ENCODE measurements at regions of chr20 and their contacts with region 1.

Region 1: GRCh38 chr20:19193349-19193748 is 19.1 kb upstream of the SLC24A3 start:
- H3K4me3 ChIP-seq: no peak overlapping the region
- H3K27ac ChIP-seq: no peak overlapping the region
- H3K4me1 ChIP-seq: no peaks in the 10 kb centered on the region
- CTCF ChIP-seq: no peak

Region 2: GRCh38 chr20:19205977-19206396 is 12.6 kb after region 1 on chr20:
- CTCF ChIA-PET with region 1: interaction called, 20 read pairs
- POLR2A ChIA-PET with region 1: no interaction called
- H3K4me3 ChIP-seq: no peak overlapping the region
- H3K27ac ChIP-seq: no peak overlapping the region
- H3K4me1 ChIP-seq: no peaks in the 10 kb centered on the region
- CTCF ChIP-seq: peak; percentile 56

Region 3: DNA sequence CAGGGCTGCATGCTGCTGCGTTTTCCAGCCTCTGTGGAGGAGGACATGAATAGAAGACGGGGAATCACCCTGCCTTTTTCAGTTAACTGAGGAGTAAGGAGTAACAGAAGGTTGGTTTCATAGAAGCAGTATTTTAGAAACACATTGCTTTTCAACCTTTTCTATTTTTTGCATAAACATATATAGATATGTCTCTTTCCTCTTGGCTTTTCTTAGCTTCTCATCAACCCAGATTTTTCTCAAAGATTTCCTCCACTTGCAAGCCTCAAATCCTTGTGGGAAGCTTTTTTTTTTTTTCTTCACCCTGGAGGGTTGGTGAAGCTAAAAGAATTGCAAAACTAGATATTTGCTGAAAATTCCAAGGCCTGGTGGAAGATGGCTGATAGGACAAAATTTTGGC is 25.1 kb after region 1 on chr20:
- CTCF ChIA-PET with region 1: no interaction called
- POLR2A ChIA-PET with region 1: no interaction called
- H3K4me3 ChIP-seq: no peak overlapping the region
- H3K27ac ChIP-seq: no peak overlapping the region
- H3K4me1 ChIP-seq: no peaks in the 10 kb centered on the region
- CTCF ChIP-seq: no peak

Measured in HEK293 (cell line).